ENCODE measurements at regions of chr1 and their contacts with region 1.

Region 1: GRCh38 chr1:90707363-90707710 is 9.8 kb downstream of the BARHL2 start:
- DNase-seq: no peak
- H3K4me3 Mint-ChIP-seq: no peak overlapping the region
- H3K27ac Mint-ChIP-seq: no peak overlapping the region
- H3K4me1 Mint-ChIP-seq: peaks cover 5% of the 10 kb centered on the region
- H3K27me3 Mint-ChIP-seq: peaks cover 79% of the 10 kb centered on the region

Region 2: GRCh38 chr1:90083995-90084394 is 623.3 kb before region 1 on chr1:
- intact Hi-C with region 1: no loop called
- DNase-seq: no peak
- H3K4me3 Mint-ChIP-seq: no peak overlapping the region
- H3K27ac Mint-ChIP-seq: no peak overlapping the region
- H3K4me1 Mint-ChIP-seq: no peaks in the 10 kb centered on the region
- H3K27me3 Mint-ChIP-seq: peaks cover 14% of the 10 kb centered on the region

Region 3: GRCh38 chr1:90729504-90730242 is 22.3 kb after region 1 on chr1:
- intact Hi-C with region 1: loop called (anchors 1 kb)
- DNase-seq: no peak
- H3K4me3 Mint-ChIP-seq: no peak overlapping the region
- H3K27ac Mint-ChIP-seq: peak overlapping the region; percentile 18
- H3K4me1 Mint-ChIP-seq: peaks cover 41% of the 10 kb centered on the region
- H3K27me3 Mint-ChIP-seq: peaks cover 73% of the 10 kb centered on the region

Region 4: DNA sequence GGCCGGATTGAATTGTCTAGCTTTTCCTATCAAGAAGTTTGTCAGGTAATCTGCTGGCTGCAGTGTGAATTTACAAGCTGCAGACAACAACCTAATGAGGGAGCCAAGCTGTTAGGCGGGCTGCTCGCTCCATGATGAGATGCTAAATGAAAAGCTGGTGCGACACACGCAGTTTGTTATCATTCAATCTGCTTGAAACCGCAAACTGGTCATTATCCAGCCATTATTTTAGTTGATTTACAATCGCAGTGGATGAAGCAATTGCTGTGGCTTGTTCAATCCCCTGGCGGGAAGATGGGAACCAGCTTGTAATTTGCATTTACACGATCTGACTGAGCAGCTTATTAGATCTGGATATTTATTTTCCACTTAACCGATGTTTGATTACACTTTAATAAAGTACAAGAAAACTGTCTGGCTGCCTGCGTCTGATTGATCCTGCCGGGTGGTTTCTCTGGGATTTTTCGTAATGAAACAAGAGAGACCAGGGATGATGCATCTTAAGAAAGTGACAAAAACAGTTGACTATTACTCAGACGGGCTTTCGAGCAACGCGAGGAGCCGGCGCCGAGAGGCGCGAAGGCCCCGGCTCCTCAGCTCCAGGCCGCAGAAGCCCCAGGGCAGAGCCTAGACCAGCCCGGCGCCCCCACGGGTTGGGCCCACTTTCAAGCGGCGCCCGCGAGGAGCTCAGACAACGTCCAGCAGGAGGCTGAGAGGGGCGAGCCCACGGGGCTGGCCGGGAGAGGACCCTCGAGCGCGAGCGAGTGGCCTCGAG is 127.7 kb after region 1 on chr1:
- intact Hi-C with region 1: loop called (anchors 5 kb)
- DNase-seq: no peak
- H3K4me3 Mint-ChIP-seq: no peak overlapping the region
- H3K27ac Mint-ChIP-seq: no peak overlapping the region
- H3K4me1 Mint-ChIP-seq: peaks cover 12% of the 10 kb centered on the region
- H3K27me3 Mint-ChIP-seq: peaks cover 82% of the 10 kb centered on the region

Measured in activated T-helper 1 cell treated with anti-CD3 and anti-CD28 coated beads, Interleukin-12 subunit alpha, Interleukin-12 subunit beta, Interleukin-2, Interleukin-4 antibody, amounts not matched to agents 30 ng/mL and 10 ng/mL and 1 ng/mL, durations not matched to agents 14 hours and 24 hours and 36 hours (primary cell).